ENCODE measurements at regions of chr4 and their contacts with region 1.

Region 1: DNA sequence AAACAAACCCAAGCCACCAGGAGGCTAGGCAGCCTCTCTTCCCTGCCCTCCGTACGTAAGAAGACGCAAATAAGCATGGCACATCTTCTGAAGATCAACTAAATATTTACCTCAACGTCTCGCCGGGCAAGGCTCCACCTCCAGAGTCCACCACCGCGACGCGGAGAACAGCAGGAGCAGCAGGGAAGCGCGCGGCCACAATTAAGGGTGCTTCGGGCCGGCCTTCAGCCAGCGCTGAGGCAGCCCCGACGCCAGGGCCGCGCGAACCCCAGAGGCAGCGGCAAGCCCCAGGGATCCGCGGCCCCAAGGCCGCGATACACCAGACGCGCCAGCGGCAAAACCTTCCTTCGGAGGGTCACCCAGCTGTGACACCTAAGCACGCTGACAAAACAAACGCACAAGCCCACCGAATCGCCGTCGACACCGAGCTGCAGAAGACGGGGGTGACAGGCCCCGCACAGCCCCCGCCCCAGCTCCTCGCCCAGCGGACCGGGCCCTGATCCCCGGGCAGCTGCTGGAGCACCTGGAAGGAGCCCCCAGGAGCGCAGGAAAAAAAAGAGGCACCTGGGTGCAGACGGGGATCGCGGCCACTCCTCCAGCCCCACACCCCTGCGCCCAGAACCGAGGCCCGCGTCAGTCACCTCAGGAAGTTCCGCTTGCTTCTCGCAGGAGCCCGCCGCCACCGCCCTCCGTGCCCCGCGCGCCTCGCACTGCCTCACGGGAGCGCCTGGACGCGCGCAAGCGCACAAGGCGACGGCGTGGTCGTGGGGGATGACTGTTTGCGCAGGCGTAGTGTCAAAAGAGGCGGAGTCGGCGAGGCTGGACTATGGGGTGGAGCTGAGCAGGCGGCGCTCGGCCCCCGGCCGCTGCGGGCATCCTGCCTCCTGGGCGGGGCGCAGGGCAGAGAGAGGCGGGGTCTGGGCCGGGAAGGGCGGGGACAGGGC is at the starts of genes HAUS3 and POLN:
- DNase-seq: peak; percentile 100
- H3K4me3 Mint-ChIP-seq: peak within 1 kb of the TSS; percentile 85
- H3K27ac Mint-ChIP-seq: peak within 1 kb of the TSS; percentile 90
- H3K4me1 Mint-ChIP-seq: peaks cover 53% of the 10 kb centered on the region
- H3K27me3 Mint-ChIP-seq: peaks cover 2% of the 10 kb centered on the region
- total RNA-seq, gene HAUS3: 19.2 and 19.9 TPM in 2 replicates
- total RNA-seq, gene POLN: 2.1 and 3.5 TPM in 2 replicates

Region 2: GRCh38 chr4:1683736-1684505 is 557.8 kb before region 1 on chr4 and contains the start of gene FAM53A:
- intact Hi-C with region 1: loop called (anchors 10 kb)
- DNase-seq: peak; percentile 93
- H3K4me3 Mint-ChIP-seq: peak within 1 kb of the TSS; percentile 87
- H3K27ac Mint-ChIP-seq: peak within 1 kb of the TSS; percentile 90
- H3K4me1 Mint-ChIP-seq: peaks cover 12% of the 10 kb centered on the region
- H3K27me3 Mint-ChIP-seq: peaks cover 2% of the 10 kb centered on the region
- total RNA-seq, gene FAM53A: 2.5 and 5.5 TPM in 2 replicates

Region 3: GRCh38 chr4:1731180-1731579 is 510.5 kb before region 1 on chr4:
- intact Hi-C with region 1: no loop called
- DNase-seq: no peak
- H3K4me3 Mint-ChIP-seq: no peak overlapping the region
- H3K27ac Mint-ChIP-seq: peak overlapping the region; percentile 48
- H3K4me1 Mint-ChIP-seq: peaks cover 15% of the 10 kb centered on the region
- H3K27me3 Mint-ChIP-seq: no peaks in the 10 kb centered on the region

Region 4: GRCh38 chr4:1792832-1793495 is 448.7 kb before region 1 on chr4 and contains the start of gene FGFR3:
- intact Hi-C with region 1: loop called (anchors 2 kb)
- DNase-seq: peak; percentile 28
- H3K4me3 Mint-ChIP-seq: peak within 1 kb of the TSS; percentile 37
- H3K27ac Mint-ChIP-seq: no peak within 1 kb of the TSS
- H3K4me1 Mint-ChIP-seq: no peaks in the 10 kb centered on the region
- H3K27me3 Mint-ChIP-seq: peaks cover 31% of the 10 kb centered on the region
- total RNA-seq, gene FGFR3: 0.29 and 0.39 TPM in 2 replicates

Region 5: DNA sequence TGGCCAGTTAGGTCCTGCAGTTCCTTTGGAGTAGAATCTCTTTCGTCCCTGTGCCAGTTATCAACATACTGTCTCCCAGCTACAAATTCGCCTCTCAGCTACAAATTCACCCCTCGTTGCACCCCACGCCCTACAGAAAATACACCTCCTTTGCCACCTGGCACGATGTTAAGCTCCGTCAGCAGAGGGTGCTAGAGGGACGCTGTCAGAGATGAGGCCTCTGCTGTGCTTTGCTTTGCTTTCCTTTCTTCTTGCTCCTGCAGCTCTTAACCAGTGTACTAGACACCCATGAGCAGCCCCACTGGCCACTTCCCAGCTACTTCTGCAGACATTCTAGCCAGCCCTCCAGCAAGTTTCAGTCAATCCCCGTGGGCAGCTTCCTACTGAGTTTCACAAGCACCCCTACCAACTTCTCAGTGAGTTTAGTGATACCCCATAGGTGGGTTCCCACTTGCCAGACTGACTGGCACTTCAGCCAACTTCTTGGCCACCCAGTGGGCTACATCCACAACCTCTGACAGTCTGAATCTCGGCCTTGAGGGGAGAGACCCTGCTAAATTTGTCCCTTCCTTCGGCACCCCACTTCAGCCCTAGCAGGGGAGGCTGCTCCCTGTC is 21.6 kb before region 1 on chr4:
- intact Hi-C with region 1: loop called (anchors 1 kb)
- DNase-seq: peak; percentile 66
- H3K4me3 Mint-ChIP-seq: no peak overlapping the region
- H3K27ac Mint-ChIP-seq: no peak overlapping the region
- H3K4me1 Mint-ChIP-seq: peaks cover 12% of the 10 kb centered on the region
- H3K27me3 Mint-ChIP-seq: no peaks in the 10 kb centered on the region

Region 6: DNA sequence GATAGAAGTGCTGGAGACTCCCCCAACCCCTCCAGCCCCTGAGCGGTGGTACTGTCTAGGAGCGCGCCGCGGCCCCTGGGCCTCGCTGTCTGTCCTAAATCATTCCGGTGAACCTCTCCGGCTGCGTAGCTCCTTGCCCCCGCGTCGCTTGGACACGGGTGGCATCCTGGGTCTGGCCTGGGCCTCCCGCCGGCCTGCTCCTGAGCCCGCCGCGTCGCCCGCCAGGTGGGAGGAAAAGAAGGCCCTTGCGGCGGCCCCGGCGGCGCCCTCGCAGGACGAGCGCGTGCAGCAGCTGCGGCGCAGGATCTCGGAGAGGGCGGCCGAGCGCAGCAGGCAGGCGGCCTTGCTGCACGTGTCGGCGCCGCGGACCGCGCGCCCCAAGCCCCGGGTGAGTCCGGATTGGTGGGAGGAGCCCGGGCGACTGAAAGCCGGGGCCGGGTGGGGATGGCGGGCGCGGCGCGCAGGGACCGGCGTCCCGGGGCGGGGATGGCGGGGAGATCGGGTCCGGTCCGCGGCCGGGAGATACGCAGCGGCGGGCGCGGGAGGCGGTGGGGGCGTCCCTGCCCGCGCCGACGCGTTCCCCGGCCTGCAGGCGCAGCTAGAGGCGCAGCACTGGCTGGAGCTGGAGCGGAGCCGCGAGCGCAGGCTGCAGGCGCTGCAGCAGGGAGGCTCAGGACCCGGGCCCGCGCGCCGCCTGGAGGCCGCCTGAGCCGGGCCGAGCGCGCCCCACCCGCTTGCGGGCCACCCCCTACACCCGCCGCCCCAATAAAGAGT is 220.7 kb after region 1 on chr4:
- intact Hi-C with region 1: loop called (anchors 1 kb)
- DNase-seq: peak; percentile 57
- H3K4me3 Mint-ChIP-seq: peak overlapping the region; percentile 71
- H3K27ac Mint-ChIP-seq: no peak overlapping the region
- H3K4me1 Mint-ChIP-seq: peaks cover 4% of the 10 kb centered on the region
- H3K27me3 Mint-ChIP-seq: peaks cover 22% of the 10 kb centered on the region

Region 7: DNA sequence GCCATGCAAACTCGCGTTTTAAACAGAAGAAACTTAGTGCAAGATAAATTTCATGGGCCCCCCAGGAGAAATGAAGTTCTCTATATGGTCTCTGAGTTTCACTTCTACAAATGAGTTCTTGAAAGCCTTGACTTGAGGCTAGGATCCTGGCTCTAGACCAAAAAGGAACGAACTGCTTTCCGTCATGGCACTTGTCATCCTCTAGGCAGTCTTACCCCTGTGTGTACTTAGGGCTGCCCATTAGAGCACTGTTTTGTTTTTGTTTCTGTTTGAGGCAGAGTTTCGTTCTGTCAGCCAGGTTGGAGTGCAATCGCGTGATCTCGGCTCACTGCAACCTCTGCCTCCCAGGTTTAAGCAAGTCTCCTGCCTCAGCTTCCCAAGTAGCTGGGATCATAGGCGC is 256.2 kb after region 1 on chr4:
- intact Hi-C with region 1: no loop called
- DNase-seq: no peak
- H3K4me3 Mint-ChIP-seq: no peak overlapping the region
- H3K27ac Mint-ChIP-seq: no peak overlapping the region
- H3K4me1 Mint-ChIP-seq: peaks cover 22% of the 10 kb centered on the region
- H3K27me3 Mint-ChIP-seq: no peaks in the 10 kb centered on the region

Region 8: DNA sequence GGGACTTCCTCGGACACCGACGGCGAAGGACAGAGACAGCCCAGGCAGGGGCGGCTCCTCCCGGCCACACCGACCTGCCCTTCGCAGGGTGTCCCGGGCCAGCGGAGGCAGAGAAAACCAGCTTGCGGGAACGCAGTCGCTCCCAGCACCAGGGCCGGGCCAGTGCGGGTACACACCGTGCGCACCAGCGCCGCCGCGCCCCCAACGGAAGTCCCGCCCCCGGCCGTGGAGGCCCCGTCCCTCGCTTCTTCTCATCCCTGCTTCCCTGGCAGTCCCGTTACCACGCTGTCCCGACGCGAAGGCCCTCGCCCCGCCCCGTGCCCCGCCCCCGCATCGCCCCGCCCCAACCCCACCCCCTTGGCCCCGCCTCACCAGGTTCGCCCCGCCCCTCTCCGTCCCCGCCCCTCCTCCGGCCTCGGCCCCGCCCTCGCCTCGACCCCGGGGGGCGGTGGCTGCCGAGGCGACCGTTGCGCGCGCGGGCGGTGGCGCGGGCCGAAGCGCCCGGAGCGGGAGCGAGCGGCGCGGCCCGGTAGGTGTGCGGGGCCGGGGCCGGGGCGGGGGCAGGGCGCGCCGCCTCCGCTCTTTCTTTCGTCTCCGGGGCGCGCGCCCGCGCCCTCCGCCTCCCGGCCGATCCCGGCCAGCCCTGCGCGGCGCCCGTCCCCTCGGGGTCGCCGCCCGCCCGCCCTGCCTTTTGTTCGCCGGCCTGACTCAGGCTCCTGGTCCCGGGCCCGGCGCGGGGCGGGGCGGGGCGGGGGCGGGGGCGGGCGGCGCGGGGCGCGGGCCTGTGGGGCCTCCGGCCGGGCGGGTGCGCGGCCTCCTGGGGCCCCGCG is 1051.1 kb after region 1 on chr4 and contains the start of gene RGS12:
- intact Hi-C with region 1: loop called (anchors 5 kb)
- DNase-seq: peak; percentile 80
- H3K4me3 Mint-ChIP-seq: peak within 1 kb of the TSS; percentile 83
- H3K27ac Mint-ChIP-seq: peak within 1 kb of the TSS; percentile 72
- H3K4me1 Mint-ChIP-seq: peaks cover 6% of the 10 kb centered on the region
- H3K27me3 Mint-ChIP-seq: peaks cover 50% of the 10 kb centered on the region
- total RNA-seq, gene RGS12: 3.1 and 3.6 TPM in 2 replicates